Posterior vena cava (tissue), 2 donors: ENCODE measurements at regions of chr10 and their contacts with region 1.

Region 1: DNA sequence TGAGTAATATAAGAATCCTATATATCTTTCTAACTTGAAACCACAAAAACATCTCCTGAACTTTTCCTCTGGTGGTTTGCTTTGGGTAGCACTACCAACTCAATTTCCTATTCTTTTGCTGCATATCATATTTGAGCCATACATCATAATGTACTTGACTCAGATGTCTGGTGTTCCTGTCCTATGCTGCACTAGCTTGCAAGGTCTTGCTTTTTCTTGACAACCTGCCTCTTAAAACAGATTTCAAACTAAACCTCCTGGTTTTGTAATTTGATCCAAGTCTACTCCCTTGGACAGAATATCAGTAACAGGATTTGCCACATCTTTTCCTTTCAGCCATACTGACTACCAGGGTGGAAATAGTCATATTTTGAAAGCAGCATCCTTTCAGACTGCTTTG is 520.3 kb upstream of the LRRTM3 start:
- DNase-seq: no peak

Region 2: GRCh38 chr10:64813391-64813790 is 1592.2 kb before region 1 on chr10:
- intact Hi-C with region 1: loop called in 1 of 2 experiments (anchors 10 kb)
- DNase-seq: no peak